GM13976 (cell line): ENCODE measurements at regions of chr10 and their contacts with region 1.

Region 1: GRCh38 chr10:44030143-44030542 is 354.8 kb downstream of the CXCL12 start:
- DNase-seq: peak; percentile 56
- CTCF ChIP-seq: peak; percentile 57

Region 2: DNA sequence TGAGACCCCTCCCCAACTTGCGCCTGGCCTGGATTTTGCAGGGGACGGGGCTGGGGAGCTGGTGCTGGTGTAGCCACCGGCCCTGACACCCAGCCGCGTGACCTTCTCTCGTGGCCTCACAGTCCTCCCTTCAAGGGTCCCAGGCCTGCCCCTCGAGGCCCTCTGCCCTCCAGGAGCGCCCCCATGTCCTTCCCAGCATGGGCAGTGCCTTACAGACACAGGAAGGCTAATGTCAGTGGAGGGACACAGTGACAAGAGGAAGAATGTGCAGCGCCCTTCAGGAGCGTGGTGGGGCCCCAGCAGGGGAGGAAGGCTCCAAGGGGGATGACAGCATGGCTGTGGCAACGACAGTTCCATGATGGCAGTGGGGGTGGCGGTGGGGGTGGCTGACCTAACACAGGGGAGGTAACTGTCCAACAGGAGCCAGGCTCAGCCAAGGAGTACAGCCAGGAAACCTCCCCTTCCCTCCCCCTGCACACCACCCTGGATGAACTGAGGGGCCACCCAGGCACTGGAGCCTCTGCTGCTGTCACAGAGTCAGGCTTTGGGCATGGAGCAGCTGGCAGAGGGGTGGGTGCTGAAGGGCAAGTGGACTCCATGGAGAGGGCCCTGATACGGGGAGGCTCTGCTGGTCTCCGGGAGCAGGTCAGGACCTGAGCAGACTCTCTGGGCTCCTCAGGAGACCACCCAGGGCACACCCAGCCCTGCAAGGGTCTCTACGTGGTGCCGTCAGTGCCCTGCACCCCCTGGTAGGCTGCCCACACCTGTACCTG is 1029.3 kb before region 1 on chr10:
- in situ Hi-C with region 1: no loop called
- DNase-seq: peak; percentile 17
- CTCF ChIP-seq: no peak

Region 3: GRCh38 chr10:43689955-43690771 is 340.0 kb before region 1 on chr10:
- in situ Hi-C with region 1: loop called (anchors 25 kb)
- DNase-seq: peak; percentile 95
- CTCF ChIP-seq: peak; percentile 96

Region 4: DNA sequence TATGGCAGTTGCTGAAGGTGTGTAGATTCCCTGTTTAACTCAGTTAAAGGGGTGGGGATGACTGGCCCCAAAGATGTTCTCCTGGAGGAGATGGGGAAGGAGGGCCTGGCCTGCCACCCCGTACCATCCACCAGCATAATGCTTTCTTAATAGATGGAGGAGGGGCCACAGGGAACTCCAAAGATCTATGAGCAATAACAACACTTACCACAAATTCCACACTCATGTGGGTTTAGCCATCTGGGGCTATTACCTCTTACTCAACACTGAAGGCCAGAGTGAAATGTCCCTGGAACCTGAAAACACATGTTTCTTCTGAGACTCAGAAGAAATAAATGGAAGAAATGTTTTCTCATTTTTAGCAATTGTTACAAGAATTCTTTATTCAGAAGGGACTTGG is 95.7 kb after region 1 on chr10:
- in situ Hi-C with region 1: no loop called
- DNase-seq: no peak
- CTCF ChIP-seq: no peak